Mucosa of descending colon (tissue), 3 donors: ENCODE measurements at regions of chr5 and their contacts with region 1.

Region 1: GRCh38 chr5:6576861-6577501 is 55.9 kb downstream of the NSUN2 start:
- DNase-seq: peak in 1 of 3 donors; percentile 46
- ATAC-seq: peak; percentile 25
- H3K4me3 ChIP-seq: no peak overlapping the region
- H3K4me1 ChIP-seq: no peaks in the 10 kb centered on the region
- CTCF ChIP-seq: no peak

Region 2: GRCh38 chr5:5492087-5492933 is 1084.7 kb before region 1 on chr5:
- intact Hi-C with region 1: loop called in 1 of 2 experiments (anchors 10 kb)
- DNase-seq: peak in 1 of 3 donors; percentile 37
- ATAC-seq: peak; percentile 52
- H3K4me3 ChIP-seq: no peak overlapping the region
- H3K4me1 ChIP-seq: peaks cover 11% of the 10 kb centered on the region
- CTCF ChIP-seq: peak; percentile 23

Region 3: DNA sequence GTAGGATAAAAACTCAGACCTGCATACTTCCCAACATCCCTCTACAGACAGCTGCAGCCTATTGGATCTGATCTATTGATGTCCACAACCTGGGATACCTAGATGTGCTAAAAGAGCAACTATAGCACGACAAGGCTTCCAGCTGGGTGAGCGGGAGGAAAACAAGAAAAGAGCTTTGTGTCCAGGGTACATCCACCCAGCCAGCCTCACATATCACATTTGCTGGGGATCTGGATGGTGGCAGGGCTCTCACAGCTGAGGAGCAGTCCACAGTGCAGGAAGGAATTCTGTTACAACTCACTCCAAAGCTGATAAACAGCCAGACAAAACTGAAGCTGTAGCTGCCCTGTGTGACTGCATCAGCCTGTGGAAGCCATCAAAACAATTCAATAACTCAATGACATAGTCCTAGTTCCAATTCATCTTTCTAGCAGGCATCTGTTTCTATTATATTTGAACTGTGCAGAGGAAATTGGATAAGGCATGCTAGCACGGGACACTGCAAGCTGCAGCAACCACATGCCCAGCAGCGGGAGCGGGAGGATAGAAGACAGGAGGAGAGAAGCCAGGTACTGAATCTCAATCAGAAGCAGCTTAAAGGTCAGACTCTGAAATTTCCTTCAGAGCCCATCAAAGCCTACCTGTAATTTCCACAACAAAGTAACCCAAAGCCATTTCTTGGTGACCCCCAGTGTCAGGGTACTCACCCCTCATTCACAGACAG is 243.6 kb before region 1 on chr5:
- intact Hi-C with region 1: no loop called
- DNase-seq: no peak
- ATAC-seq: no peak
- H3K4me3 ChIP-seq: no peak overlapping the region
- H3K4me1 ChIP-seq: no peaks in the 10 kb centered on the region
- CTCF ChIP-seq: no peak

Region 4: DNA sequence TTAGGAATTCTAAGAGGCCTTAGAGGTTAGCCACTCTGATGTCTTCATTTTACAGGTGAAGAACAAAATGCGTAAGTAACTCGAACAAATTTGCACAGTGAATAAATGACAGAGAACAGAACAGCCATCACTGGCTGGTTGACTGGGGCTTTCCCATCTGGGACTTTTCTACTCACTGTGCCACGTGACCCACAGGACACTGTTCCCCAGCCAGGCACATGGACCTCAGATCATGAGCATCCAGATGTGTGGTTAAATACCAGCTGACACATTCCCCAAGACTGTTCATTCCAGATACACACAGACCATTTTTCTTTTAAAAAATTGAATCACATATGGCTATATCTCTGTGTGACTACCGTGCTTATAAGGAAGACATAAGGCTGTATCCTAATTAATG is 172.9 kb before region 1 on chr5:
- intact Hi-C with region 1: no loop called
- DNase-seq: no peak
- ATAC-seq: no peak
- H3K4me3 ChIP-seq: no peak overlapping the region
- H3K4me1 ChIP-seq: no peaks in the 10 kb centered on the region
- CTCF ChIP-seq: no peak